ENCODE measurements at regions of chr5 and their contacts with region 1.

Region 1: DNA sequence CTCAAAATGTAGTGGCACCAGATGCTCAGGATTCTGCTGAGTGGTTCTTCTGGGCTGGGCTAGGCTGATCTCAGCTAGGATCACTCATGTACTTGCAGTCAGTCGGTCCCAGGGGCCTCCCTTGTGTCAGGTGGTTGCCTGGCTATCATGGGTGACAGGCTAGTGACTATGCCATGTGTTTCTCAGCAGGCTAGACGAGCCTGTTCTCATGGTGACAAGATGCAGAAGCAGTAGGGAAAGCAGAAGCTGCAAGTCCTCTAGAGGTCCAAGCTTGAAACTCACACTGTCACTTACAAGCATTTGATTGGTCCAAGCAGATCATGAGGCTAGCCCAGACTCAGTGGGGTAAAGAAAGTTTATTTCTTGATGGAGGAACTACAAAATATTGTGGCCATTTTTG is 15.2 kb upstream of the KCNMB1 start:
- DNase-seq: no peak
- ATAC-seq: peak; percentile 54 to 81 (median 66)
- H3K4me3 ChIP-seq: no peak overlapping the region
- H3K27ac ChIP-seq: no peak overlapping the region
- H3K4me1 ChIP-seq: no peaks in the 10 kb centered on the region
- H3K27me3 ChIP-seq: no peaks in the 10 kb centered on the region
- CTCF ChIP-seq: no peak
- POLR2A ChIP-seq: no peak

Region 2: DNA sequence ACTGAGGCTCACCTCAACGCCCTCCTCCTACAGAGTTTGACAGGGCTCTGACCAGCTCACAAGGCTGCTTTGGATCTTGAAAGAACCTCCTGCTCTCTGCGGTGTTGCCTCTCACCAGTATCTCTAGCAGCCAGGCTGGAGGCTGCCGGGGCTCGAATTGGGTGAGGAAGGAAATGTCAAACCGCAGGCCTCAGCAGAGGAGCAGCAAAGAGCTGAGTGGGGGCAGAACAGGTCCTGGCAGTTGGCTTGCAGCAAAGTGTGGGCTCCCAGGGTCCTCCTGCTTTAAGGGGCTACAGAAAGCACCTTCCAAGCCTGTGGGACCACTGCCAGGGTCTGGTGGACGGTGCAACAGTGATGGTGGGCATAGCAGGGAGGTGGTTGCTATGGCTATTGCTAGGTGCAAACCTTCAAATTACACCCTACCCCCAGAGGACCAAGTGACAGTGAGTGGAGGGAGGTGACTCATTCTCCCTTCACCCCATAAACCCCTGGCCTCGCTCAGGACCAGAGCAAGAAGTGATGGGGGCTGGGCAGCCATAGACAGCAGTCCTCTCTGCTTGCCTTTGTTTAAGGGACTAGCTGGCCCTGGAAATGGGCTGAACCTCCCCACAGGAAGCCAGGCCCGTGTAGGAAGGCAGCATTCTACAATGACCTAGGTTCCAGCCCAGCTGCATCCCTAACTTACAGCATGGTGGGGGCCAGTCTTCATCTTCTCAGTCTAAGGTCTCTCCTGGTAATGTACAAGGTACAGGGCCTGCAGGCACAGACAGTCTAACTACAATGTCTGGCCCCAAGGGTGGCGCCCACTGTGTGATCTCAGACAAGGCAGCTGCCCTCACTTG is 125.6 kb before region 1 on chr5:
- intact Hi-C with region 1: loop called in 1 of 2 experiments (anchors 5 kb)
- DNase-seq: peak in 2 of 3 donors; percentile 55 to 74
- ATAC-seq: peak; percentile 58 to 72 (median 63)
- H3K4me3 ChIP-seq: no peak overlapping the region
- H3K27ac ChIP-seq: no peak overlapping the region
- H3K4me1 ChIP-seq: peaks cover 0 to 4% (median 0%) of the 10 kb centered on the region in 4 donors
- H3K27me3 ChIP-seq: no peaks in the 10 kb centered on the region
- CTCF ChIP-seq: no peak
- POLR2A ChIP-seq: no peak